HepG2 (cell line): ENCODE measurements at regions of chr11 and their contacts with region 1.

Region 1: GRCh38 chr11:65329944-65330403 is 3.7 kb upstream of the DPF2 start:
- DNase-seq: peak; percentile 86
- ATAC-seq: peak; percentile 60
- H3K4me3 ChIP-seq: peak overlapping the region; percentile 20 to 41 (median 22); a peak in 2 of 6 replicates
- H3K27ac ChIP-seq: no peak overlapping the region
- H3K4me1 ChIP-seq: peaks cover 19% of the 10 kb centered on the region
- H3K27me3 ChIP-seq: no peaks in the 10 kb centered on the region; a peak in 1 of 5 replicates
- CTCF ChIP-seq: peak; percentile 82
- EP300 ChIP-seq: no peak
- POLR2A ChIP-seq: no peak
- RAD21 ChIP-seq: peak; percentile 65

Region 2: DNA sequence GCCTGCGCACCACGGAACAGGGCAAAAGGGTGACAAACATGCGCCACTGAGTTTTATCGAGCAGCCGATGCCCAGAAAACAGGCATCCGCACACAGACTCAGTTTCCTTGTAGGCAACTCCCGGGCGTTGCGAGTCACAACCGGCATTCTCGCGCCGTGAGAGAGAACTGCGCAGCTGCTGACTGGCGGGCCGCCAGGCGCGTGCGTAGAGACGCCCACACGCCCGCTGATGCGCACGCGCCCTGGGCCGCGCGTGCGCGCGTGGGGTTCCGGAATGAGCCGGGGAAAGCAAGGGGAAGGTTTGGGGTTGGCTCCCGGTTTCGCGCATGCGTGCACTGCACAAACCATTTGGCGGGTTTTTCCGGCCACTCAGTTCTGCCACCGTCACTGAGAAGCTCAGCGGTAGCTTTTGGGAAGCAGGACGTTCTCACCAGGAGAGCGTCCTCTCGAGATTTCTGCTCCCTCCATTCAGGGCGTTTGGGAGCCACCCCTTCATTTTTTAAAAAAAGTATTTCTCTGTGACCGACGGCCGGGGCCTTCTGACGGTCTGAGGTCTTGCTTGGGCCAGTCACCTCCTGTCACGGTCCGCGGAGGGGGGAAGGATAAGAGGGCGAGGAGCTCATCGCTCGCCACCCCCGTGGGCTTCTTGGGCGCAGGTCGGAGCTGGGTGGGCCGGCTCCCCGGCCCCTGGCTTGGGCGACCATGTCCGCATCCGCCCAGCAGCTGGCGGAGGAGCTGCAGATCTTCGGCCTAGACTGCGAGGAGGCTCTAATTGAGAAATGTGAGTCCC is 68.2 kb before region 1 on chr11 and contains the start of gene POLA2:
- CTCF ChIA-PET with region 1: no interaction called
- POLR2A ChIA-PET with region 1: interaction called, 18 read pairs
- in situ Hi-C with region 1: no loop called
- intact Hi-C with region 1: no loop called
- DNase-seq: peak; percentile 90
- ATAC-seq: peak; percentile 90
- H3K4me3 ChIP-seq: peak within 1 kb of the TSS; percentile 73 to 86 (median 75)
- H3K27ac ChIP-seq: peak within 1 kb of the TSS; percentile 80
- H3K4me1 ChIP-seq: peaks cover 45% of the 10 kb centered on the region
- H3K27me3 ChIP-seq: no peaks in the 10 kb centered on the region; a peak in 2 of 5 replicates
- CTCF ChIP-seq: no peak
- EP300 ChIP-seq: no peak
- POLR2A ChIP-seq: peak; percentile 86 to 89
- RAD21 ChIP-seq: no peak
- total RNA-seq, gene POLA2: 10.7 and 15.6 TPM in 2 replicates

Region 3: DNA sequence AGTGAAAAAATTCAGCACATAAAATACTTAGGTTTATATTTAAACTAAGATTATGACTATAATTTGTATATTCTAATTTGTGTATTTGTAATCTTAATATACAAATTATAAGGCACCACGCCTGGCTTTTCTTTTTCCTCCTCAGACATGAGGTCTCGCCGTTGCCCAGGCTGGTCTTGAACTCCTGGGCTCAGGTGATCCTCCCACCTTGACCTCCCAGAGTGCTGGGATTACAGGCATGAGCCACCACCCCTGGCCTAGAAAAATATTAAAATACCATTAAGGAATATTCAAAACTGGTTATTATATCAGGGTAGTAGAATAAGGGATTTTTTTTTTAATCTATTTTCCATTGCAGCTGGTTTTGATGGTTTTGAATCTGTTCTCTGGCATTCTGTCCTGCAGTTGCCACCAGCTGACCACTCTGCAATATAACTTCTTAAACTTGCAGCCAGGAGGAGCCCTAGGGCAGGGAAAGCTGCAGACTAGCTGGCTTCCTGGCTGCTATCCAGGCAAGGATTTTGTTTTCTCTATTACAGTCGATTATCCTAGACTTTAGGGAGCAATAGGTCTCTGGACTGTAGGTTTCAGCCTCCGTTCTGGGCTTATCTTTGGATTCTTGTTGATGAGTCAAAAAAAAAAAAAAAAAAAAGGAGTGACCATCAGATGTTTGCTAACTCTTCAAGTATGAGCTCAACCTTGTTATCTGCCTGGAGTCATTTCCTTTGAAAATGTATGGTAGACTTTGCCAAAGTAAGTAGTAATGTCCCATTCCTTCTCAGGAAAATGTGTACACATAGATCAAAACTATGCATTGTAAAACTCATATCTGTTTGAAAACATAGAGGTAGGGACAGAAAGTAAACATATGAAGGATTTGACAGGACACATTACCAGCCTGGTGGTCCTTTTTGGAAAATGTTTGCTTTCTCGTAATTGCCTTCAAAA is 55.0 kb before region 1 on chr11:
- CTCF ChIA-PET with region 1: interaction called, 53 read pairs
- POLR2A ChIA-PET with region 1: interaction called, 87 read pairs
- in situ Hi-C with region 1: no loop called
- intact Hi-C with region 1: loop called (anchors 1 kb)
- DNase-seq: peak; percentile 89
- ATAC-seq: peak; percentile 92
- H3K4me3 ChIP-seq: peak overlapping the region in 1 of 3 experiments; percentile 17; a peak in 2 of 6 replicates
- H3K27ac ChIP-seq: peak overlapping the region; percentile 30
- H3K4me1 ChIP-seq: peaks cover 30% of the 10 kb centered on the region
- H3K27me3 ChIP-seq: no peaks in the 10 kb centered on the region
- CTCF ChIP-seq: peak; percentile 93
- EP300 ChIP-seq: no peak
- POLR2A ChIP-seq: no peak
- RAD21 ChIP-seq: peak; percentile 95

Region 4: GRCh38 chr11:65301491-65302329 is 28.3 kb before region 1 on chr11:
- CTCF ChIA-PET with region 1: no interaction called
- POLR2A ChIA-PET with region 1: interaction called, 10 read pairs
- in situ Hi-C with region 1: no loop called
- intact Hi-C with region 1: no loop called
- DNase-seq: no peak
- ATAC-seq: peak; percentile 72
- H3K4me3 ChIP-seq: peak overlapping the region in 1 of 3 experiments; percentile 33; a peak in 1 of 6 replicates
- H3K27ac ChIP-seq: no peak overlapping the region
- H3K4me1 ChIP-seq: peaks cover 46% of the 10 kb centered on the region
- H3K27me3 ChIP-seq: no peaks in the 10 kb centered on the region
- CTCF ChIP-seq: peak; percentile 10; the same call in 1 of the 2 replicates
- EP300 ChIP-seq: no peak
- POLR2A ChIP-seq: no peak
- RAD21 ChIP-seq: no peak

Region 5: DNA sequence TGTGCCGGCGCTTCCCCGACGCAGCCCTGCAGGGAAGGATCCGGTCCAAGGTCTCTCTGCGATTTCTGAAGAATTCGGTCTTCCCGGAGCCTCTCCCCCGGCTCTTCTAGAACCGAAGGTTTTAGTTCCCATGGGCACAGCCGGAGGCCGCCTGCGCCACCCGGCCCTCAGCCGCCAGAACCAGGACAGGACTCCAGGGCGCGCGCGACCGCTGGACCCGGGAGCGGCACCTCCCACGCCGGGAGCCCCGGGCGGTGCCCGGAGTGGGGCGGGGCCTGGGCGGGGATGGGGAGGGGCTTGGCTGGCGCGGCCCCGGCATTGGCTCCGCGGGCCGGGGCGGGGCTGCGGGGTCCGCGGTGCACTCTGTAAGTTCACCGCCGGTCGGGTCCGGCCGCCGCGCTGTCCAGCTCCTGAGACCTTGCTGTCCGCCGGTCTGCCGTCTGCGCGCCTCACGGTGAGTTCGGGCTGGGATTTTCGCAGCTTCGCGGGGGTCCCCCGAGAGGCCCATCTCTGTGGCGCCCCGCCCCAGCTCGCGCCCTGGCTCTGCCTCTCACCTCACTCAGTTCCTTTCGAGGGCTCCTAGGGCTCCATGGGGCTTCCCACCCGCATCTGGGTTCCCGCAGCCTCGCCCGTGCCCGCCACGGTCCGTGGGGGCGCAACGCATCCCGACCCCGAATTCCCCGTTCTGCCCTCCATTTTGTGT is 15.3 kb before region 1 on chr11 and contains the start of gene CDC42EP2:
- CTCF ChIA-PET with region 1: interaction called, 10 read pairs
- POLR2A ChIA-PET with region 1: interaction called, 31 read pairs
- in situ Hi-C with region 1: no loop called
- intact Hi-C with region 1: loop called (anchors 1 kb)
- DNase-seq: peak; percentile 74
- ATAC-seq: peak; percentile 89
- H3K4me3 ChIP-seq: peak within 1 kb of the TSS; percentile 88 to 100 (median 95)
- H3K27ac ChIP-seq: peak within 1 kb of the TSS; percentile 77
- H3K4me1 ChIP-seq: peaks cover 64% of the 10 kb centered on the region
- H3K27me3 ChIP-seq: no peaks in the 10 kb centered on the region
- CTCF ChIP-seq: no peak
- EP300 ChIP-seq: no peak
- POLR2A ChIP-seq: peak; percentile 58 to 95
- RAD21 ChIP-seq: no peak; the same call in 1 of the 2 replicates
- total RNA-seq, gene CDC42EP2: 2.5 and 7.1 TPM in 2 replicates

Region 6: GRCh38 chr11:65354265-65355012 is 24.5 kb after region 1 on chr11 and contains the start of gene TIGD3:
- CTCF ChIA-PET with region 1: no interaction called
- POLR2A ChIA-PET with region 1: interaction called, 33 read pairs
- in situ Hi-C with region 1: no loop called
- intact Hi-C with region 1: no loop called
- DNase-seq: peak; percentile 92
- ATAC-seq: peak; percentile 79
- H3K4me3 ChIP-seq: peak within 1 kb of the TSS; percentile 70 to 82 (median 77)
- H3K27ac ChIP-seq: peak within 1 kb of the TSS; percentile 64
- H3K4me1 ChIP-seq: peaks cover 42% of the 10 kb centered on the region
- H3K27me3 ChIP-seq: no peaks in the 10 kb centered on the region
- CTCF ChIP-seq: peak; percentile 33
- EP300 ChIP-seq: no peak
- POLR2A ChIP-seq: peak; percentile 45 to 92
- RAD21 ChIP-seq: 0 out of 2 replicates have a peak, but pooled peaks have one; percentile 15
- total RNA-seq, gene TIGD3: 4.0 and 4.9 TPM in 2 replicates

Region 7: DNA sequence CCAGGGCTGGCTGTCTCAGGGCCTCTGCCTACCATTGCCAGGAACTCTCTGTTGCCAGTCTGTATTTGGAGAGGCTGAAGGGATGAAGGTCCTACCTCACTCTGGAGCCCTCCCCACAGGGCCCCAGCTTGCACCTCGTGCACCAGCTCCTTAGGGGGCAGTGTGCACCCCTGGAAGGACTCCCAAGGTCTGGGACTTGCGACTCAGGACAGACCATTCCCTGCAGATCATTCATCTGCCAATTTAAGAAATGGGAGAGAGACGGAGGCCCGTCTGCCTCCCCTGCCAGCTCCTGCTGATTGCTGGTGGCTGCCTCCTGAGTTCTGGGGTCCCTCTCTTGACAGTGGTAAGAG is 141.4 kb after region 1 on chr11:
- CTCF ChIA-PET with region 1: no interaction called
- POLR2A ChIA-PET with region 1: interaction called, 12 read pairs
- in situ Hi-C with region 1: no loop called
- intact Hi-C with region 1: no loop called
- DNase-seq: peak; percentile 73
- ATAC-seq: peak; percentile 92
- H3K4me3 ChIP-seq: peak overlapping the region; percentile 31 to 63 (median 33); a peak in 5 of 6 replicates
- H3K27ac ChIP-seq: no peak overlapping the region
- H3K4me1 ChIP-seq: peaks cover 57% of the 10 kb centered on the region
- H3K27me3 ChIP-seq: no peaks in the 10 kb centered on the region; a peak in 1 of 5 replicates
- CTCF ChIP-seq: peak; percentile 90
- EP300 ChIP-seq: no peak
- POLR2A ChIP-seq: no peak; a peak in 1 of 4 replicates
- RAD21 ChIP-seq: peak; percentile 86